ENCODE measurements at regions of chr16 and their contacts with region 1.

Region 1: GRCh38 chr16:2703241-2703745 is 16.7 kb downstream of the PRSS27 start:
- DNase-seq: peak; percentile 90 to 97
- ATAC-seq: peak; percentile 90 to 92
- H3K4me3 ChIP-seq: no peak overlapping the region
- H3K27ac ChIP-seq: peak overlapping the region; percentile 65 to 86 (median 78)
- H3K4me1 ChIP-seq: peaks cover 29% of the 10 kb centered on the region in 2 donors
- H3K27me3 ChIP-seq: no peaks in the 10 kb centered on the region
- CTCF ChIP-seq: no peak
- POLR2A ChIP-seq: no peak

Region 2: GRCh38 chr16:2459647-2460390 is 243.5 kb before region 1 on chr16 and contains the start of gene TEDC2:
- in situ Hi-C with region 1: no loop called
- intact Hi-C with region 1: no loop called
- DNase-seq: peak; percentile 90 to 95
- ATAC-seq: peak; percentile 96 to 97
- H3K4me3 ChIP-seq: peak within 1 kb of the TSS; percentile 56 to 64 (median 60)
- H3K27ac ChIP-seq: peak within 1 kb of the TSS; percentile 53 to 73 (median 68)
- H3K4me1 ChIP-seq: peaks cover 4 to 13% of the 10 kb centered on the region in 2 donors
- H3K27me3 ChIP-seq: no peaks in the 10 kb centered on the region
- CTCF ChIP-seq: no peak
- POLR2A ChIP-seq: no peak
- total RNA-seq, gene TEDC2: 0.33 to 0.91 TPM in 2 of 4 donors, not detected in the others

Region 3: GRCh38 chr16:2720719-2721633 is 17.7 kb after region 1 on chr16:
- in situ Hi-C with region 1: no loop called
- intact Hi-C with region 1: loop called (anchors 2 kb)
- DNase-seq: peak; percentile 49 to 71
- ATAC-seq: peak; percentile 86 to 89
- H3K4me3 ChIP-seq: peak overlapping the region; percentile 57 to 86 (median 66)
- H3K27ac ChIP-seq: peak overlapping the region; percentile 21 to 73 (median 63)
- H3K4me1 ChIP-seq: peaks cover 8 to 25% of the 10 kb centered on the region in 2 donors
- H3K27me3 ChIP-seq: peaks cover 0 to 5% (median under 1%) of the 10 kb centered on the region in 3 donors
- CTCF ChIP-seq: peak; percentile 37 to 99 (median 62)
- POLR2A ChIP-seq: no peak

Measured in gastrocnemius medialis (tissue), 4 donors.